ENCODE measurements at regions of chr20 and their contacts with region 1.

Region 1: DNA sequence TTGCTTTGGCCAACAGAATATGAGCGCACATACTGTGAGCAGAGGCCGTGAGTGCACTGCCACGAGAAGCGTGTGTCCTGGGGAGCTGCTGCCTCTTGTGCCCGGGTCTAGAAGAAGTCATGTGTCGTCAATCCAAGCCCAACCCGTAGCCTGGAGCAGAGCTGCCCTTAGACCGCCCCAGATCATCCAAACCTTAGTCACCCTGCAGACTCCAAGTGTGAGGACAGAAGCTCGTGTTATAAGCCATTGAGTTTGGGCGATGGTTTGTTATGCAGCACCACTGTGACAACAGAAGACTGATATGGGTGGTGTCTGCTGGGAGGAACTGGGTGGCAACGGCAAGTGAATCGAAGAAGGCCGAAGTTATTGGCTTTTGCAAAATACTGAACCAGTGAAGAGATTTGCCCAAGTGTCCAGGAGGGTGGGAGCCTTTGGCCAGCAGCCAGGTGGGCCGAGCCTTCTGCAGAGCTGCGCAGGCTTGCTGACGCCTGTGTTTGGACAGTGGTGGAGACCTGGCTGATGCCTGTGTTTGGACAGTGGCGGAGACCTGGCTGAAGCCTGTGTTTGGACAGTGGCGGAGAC is 101.3 kb upstream of the SULF2 start:
- DNase-seq: peak in 2 of 3 donors; percentile 61 to 74
- ATAC-seq: peak in 3 of 4 donors; percentile 42 to 94 (median 53)
- H3K4me3 ChIP-seq: no peak overlapping the region
- H3K27ac ChIP-seq: no peak overlapping the region
- H3K4me1 ChIP-seq: no peaks in the 10 kb centered on the region
- H3K27me3 ChIP-seq: no peaks in the 10 kb centered on the region
- CTCF ChIP-seq: no peak
- POLR2A ChIP-seq: no peak

Region 2: DNA sequence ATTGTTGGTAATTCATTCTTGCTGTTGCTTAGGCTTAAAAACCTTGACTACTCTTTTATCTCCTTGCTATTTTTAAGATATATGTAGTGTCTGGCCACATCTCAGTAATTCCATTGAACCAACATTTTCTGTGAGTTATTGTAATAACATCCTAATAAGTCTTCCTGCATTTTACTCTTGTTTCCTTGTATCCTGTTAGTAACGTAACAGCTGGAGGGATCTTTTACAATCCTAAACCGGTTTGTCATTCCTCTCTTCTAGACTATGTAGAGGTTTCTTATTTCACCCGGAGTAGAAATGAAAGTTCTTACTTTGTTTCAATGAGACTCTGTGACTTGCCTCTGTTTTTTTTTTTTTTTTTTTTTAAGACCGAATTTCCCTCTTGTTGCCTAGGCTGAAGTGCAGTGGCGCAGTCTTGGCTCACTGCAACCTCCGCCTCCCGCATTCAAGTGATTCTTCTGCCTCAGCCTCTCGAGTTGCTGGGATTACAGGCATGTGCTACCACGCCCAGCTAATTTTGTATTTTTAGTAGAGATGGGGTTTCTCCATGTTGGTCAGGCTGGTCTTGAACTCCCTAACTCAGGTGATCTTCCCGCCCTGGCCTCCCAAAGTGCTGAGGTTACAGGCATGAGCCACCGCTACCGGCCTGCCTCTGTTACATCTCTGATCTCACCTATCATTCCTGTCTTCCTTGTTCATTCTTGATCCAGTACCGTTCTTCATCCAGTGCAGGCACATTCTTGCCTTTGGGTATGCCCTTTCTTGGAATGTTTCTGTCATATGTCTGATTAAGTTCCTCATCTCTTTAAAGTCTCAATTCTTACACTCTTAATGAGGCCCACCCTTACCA is 340.1 kb before region 1 on chr20:
- intact Hi-C with region 1: no loop called
- DNase-seq: no peak
- ATAC-seq: no peak
- H3K4me3 ChIP-seq: no peak overlapping the region
- H3K27ac ChIP-seq: no peak overlapping the region
- H3K4me1 ChIP-seq: no peaks in the 10 kb centered on the region
- H3K27me3 ChIP-seq: no peaks in the 10 kb centered on the region
- CTCF ChIP-seq: no peak
- POLR2A ChIP-seq: no peak

Region 3: GRCh38 chr20:47676219-47676721 is 210.3 kb before region 1 on chr20:
- intact Hi-C with region 1: no loop called
- DNase-seq: no peak
- ATAC-seq: no peak
- H3K4me3 ChIP-seq: no peak overlapping the region
- H3K27ac ChIP-seq: no peak overlapping the region
- H3K4me1 ChIP-seq: no peaks in the 10 kb centered on the region
- H3K27me3 ChIP-seq: no peaks in the 10 kb centered on the region
- CTCF ChIP-seq: no peak
- POLR2A ChIP-seq: no peak

Region 4: DNA sequence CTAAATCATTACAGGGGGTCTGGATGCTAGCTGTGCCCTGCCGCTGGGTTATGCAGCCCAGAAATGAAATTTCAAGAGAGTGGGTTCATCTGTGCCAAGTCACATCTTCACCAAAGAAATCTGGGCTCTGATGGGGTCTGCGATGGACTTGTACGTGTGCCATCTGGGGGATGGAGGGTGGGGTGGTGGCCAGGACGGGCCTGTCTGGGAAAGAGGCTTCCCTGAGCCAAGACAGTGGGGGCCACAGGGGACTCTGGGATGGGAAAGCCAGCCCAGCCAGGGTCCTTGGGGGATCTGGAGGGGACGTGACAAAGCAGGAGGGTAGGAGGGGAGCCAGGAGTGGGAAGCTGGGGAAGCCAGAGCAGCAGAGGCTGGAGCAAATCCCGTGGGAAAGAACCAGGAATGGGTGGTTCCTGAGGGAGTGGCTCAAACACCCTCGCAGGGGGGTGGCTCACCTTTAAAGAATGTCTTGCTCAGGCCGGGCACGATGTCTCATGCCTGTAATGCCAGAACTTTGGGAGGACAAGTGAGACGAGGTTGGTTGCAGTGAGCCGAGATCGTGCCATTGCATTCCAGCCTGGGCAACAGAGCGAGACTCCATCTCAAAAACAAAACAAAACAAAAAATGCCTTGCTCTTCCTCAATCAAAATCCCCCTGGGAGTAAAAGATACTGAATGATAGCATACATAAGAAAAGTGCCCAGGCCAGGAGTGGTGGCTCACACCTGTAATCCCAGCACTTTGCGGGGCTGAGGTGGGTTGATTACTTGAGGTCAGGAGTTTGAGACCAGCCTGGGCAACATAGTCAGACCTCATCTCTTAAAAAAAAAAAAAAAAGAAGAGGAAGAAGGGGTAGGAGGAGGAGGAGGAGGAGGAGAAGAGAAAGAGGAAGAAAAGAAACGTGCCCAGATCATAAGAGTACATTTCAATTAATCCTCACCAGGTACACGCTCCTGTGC is 64.8 kb before region 1 on chr20:
- intact Hi-C with region 1: loop called in 1 of 2 experiments (anchors 10 kb)
- DNase-seq: no peak
- ATAC-seq: no peak
- H3K4me3 ChIP-seq: no peak overlapping the region
- H3K27ac ChIP-seq: no peak overlapping the region
- H3K4me1 ChIP-seq: no peaks in the 10 kb centered on the region
- H3K27me3 ChIP-seq: no peaks in the 10 kb centered on the region
- CTCF ChIP-seq: no peak
- POLR2A ChIP-seq: no peak

Region 5: DNA sequence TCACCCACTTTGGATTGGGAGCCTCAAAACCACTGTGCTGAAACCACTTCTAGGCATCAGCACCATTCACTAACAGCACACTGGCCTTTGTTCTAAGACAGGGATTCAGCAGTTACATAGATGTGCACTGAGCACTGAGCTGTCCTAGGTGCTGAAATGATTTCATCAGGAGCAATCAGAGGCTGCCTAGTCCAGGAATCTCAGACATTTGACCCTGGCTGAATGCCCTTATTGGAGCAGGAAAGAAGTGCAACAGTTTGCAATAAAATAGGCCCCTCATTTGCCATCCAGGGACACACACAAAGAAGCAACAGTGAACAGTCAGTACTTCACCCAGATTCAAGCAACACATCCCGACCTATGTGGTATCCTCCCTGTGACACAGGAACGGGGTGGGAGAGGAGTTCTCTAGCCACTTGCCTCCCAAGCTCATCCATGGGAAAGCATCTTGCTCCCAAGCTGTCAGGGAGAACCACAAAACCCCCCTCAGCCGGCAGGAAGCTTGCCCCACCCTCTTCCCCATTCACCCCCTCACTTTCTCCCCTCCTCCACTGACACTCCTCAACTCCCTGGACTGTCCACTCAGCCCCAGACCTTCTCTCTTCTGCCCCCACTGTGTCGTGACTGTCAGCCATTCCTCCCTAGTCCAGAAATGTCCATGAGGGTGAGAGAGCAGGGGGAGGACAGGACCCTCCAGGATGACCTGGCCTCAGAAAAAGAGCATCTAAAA is 636.8 kb after region 1 on chr20:
- intact Hi-C with region 1: loop called in 1 of 2 experiments (anchors 10 kb)
- DNase-seq: no peak
- ATAC-seq: peak in 3 of 4 donors; percentile 67 to 86 (median 70)
- H3K4me3 ChIP-seq: no peak overlapping the region
- H3K27ac ChIP-seq: no peak overlapping the region
- H3K4me1 ChIP-seq: no peaks in the 10 kb centered on the region
- H3K27me3 ChIP-seq: no peaks in the 10 kb centered on the region
- CTCF ChIP-seq: no peak
- POLR2A ChIP-seq: no peak